WTC11 (cell line): ENCODE measurements at regions of chr1 and their contacts with region 1.

Region 1: GRCh38 chr1:53878492-53879105 is 11.0 kb downstream of the YIPF1 start:
- DNase-seq: no peak
- ATAC-seq: no peak
- H3K4me3 Mint-ChIP-seq: no peak overlapping the region
- H3K27ac Mint-ChIP-seq: no peak overlapping the region
- H3K4me1 Mint-ChIP-seq: no peaks in the 10 kb centered on the region
- H3K27me3 Mint-ChIP-seq: no peaks in the 10 kb centered on the region
- CTCF ChIP-seq: 0 out of 2 replicates have a peak, but pooled peaks have one; percentile 15

Region 2: DNA sequence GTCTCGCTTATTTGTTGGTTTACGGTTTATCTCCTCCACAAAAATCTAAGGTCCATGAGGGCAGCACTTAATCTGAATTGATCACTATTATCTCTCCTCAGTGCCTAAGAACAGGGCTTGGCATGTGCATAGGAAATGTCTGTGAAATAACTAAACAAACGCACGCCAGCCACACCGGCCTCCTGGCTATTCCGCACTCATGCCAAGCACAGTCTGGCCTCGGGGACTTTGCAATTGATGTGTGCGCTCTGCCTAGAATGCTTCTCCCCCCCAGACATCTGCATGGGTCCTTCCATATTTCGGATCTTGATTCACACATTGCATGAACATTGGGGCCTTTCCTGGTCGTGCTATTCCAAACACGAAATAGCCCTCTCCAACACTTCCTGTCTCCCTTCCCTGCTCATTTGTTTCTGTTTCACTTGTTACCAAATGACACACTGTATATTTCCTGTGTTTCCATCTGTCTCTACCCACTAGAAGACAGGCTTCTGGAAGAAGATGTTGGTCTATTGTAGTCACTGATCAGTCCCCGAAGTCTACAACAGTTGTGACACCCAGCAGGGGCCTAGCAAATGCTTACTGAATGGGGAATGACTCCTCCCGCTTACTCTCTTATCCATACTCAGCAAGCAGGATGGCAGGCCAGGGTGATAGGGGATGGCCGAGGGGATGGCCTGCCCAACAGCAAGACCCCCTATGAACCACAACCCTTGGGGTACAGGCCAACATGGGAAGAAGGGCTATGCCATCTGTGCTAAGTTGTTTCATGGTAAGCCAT is 233.5 kb before region 1 on chr1:
- CTCF ChIA-PET with region 1: no interaction called
- POLR2A ChIA-PET with region 1: no interaction called
- DNase-seq: no peak
- ATAC-seq: no peak
- H3K4me3 Mint-ChIP-seq: no peak overlapping the region
- H3K27ac Mint-ChIP-seq: no peak overlapping the region
- H3K4me1 Mint-ChIP-seq: peaks cover 12% of the 10 kb centered on the region; the same call in 1 of the 2 replicates
- H3K27me3 Mint-ChIP-seq: no peaks in the 10 kb centered on the region
- CTCF ChIP-seq: no peak

Region 3: DNA sequence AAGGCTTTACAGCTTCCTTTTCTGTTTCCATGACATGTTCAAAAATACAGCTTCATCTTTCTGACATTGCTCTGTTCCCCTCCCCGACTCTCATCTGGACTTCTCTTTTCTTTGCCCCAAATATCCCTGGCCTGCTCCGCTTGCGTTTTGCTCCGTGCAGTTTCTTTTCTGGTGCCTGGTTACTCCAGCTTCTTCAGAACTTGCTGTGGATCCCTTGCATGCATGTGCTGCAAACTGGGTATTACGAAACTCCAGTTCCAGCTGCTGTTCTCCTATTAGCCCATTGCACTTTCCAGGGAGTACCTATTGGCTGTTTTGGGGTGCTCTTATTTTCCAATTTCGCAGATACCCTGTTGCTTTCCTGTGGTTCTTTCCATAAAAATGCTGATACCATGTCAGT is 30.6 kb before region 1 on chr1:
- CTCF ChIA-PET with region 1: no interaction called
- POLR2A ChIA-PET with region 1: no interaction called
- DNase-seq: no peak
- ATAC-seq: no peak
- H3K4me3 Mint-ChIP-seq: no peak overlapping the region
- H3K27ac Mint-ChIP-seq: no peak overlapping the region
- H3K4me1 Mint-ChIP-seq: no peaks in the 10 kb centered on the region
- H3K27me3 Mint-ChIP-seq: no peaks in the 10 kb centered on the region; the same call in 1 of the 2 replicates
- CTCF ChIP-seq: no peak

Region 4: GRCh38 chr1:53860967-53861411 is 17.6 kb before region 1 on chr1:
- CTCF ChIA-PET with region 1: interaction called, 33 read pairs
- POLR2A ChIA-PET with region 1: no interaction called
- DNase-seq: peak; percentile 44
- ATAC-seq: peak; percentile 97
- H3K4me3 Mint-ChIP-seq: no peak overlapping the region
- H3K27ac Mint-ChIP-seq: peak overlapping the region; percentile 46
- H3K4me1 Mint-ChIP-seq: peaks cover 5% of the 10 kb centered on the region
- H3K27me3 Mint-ChIP-seq: no peaks in the 10 kb centered on the region
- CTCF ChIP-seq: peak; percentile 57

Region 5: GRCh38 chr1:53913352-53914033 is 34.9 kb after region 1 on chr1:
- CTCF ChIA-PET with region 1: interaction called, 19 read pairs
- POLR2A ChIA-PET with region 1: no interaction called
- DNase-seq: no peak
- ATAC-seq: peak; percentile 72
- H3K4me3 Mint-ChIP-seq: peak overlapping the region; percentile 31
- H3K27ac Mint-ChIP-seq: peak overlapping the region; percentile 82; the same call in 1 of the 2 replicates
- H3K4me1 Mint-ChIP-seq: peaks cover 29% of the 10 kb centered on the region
- H3K27me3 Mint-ChIP-seq: no peaks in the 10 kb centered on the region
- CTCF ChIP-seq: no peak

Region 6: GRCh38 chr1:53959664-53960250 is 81.2 kb after region 1 on chr1:
- CTCF ChIA-PET with region 1: interaction called, 17 read pairs
- POLR2A ChIA-PET with region 1: no interaction called
- DNase-seq: no peak
- ATAC-seq: no peak
- H3K4me3 Mint-ChIP-seq: no peak overlapping the region
- H3K27ac Mint-ChIP-seq: no peak overlapping the region
- H3K4me1 Mint-ChIP-seq: peaks cover 24% of the 10 kb centered on the region
- H3K27me3 Mint-ChIP-seq: no peaks in the 10 kb centered on the region
- CTCF ChIP-seq: peak; percentile 38; the same call in 1 of the 2 replicates